HepG2 (cell line): ENCODE measurements at regions of chr9 and their contacts with region 1.

Region 1: DNA sequence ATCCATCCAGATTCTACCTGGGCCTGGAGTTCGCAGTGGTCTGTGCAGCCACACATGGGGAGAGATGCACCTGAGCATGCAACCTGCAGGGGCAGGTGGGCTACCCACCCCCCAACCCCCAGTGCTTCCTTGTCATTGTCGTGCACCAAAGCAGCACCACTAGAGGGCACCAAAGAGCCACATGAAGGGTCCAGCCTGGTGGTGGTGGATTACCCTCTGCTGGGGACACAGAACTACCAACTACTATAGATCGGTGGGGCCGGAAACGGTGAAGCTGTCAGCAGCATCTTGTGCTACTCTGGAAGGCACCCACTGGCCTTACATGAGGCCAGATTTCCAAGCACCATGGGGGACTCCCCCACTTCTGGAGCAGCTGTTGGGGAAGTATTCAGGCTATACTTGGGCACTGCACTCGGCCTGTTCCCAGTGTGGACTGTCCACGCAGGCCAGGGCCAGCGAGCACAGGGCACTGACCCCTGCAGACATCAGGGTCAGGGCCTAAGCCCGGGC is 60.2 kb upstream of the TBC1D2 start:
- DNase-seq: peak; percentile 80
- ATAC-seq: peak; percentile 98
- H3K4me3 ChIP-seq: no peak overlapping the region
- H3K27ac ChIP-seq: no peak overlapping the region
- H3K4me1 ChIP-seq: no peaks in the 10 kb centered on the region
- H3K27me3 ChIP-seq: peaks cover 0 to 12% of the 10 kb centered on the region in 2 experiments; a peak in 3 of 5 replicates
- CTCF ChIP-seq: peak; percentile 96
- EP300 ChIP-seq: no peak
- POLR2A ChIP-seq: no peak
- RAD21 ChIP-seq: peak; percentile 87

Region 2: GRCh38 chr9:97934321-97935115 is 381.1 kb before region 1 on chr9:
- CTCF ChIA-PET with region 1: no interaction called
- POLR2A ChIA-PET with region 1: no interaction called
- in situ Hi-C with region 1: no loop called
- intact Hi-C with region 1: no loop called
- DNase-seq: no peak
- ATAC-seq: no peak
- H3K4me3 ChIP-seq: no peak overlapping the region
- H3K27ac ChIP-seq: no peak overlapping the region
- H3K4me1 ChIP-seq: no peaks in the 10 kb centered on the region
- H3K27me3 ChIP-seq: peaks cover 2 to 4% of the 10 kb centered on the region in 2 experiments; a peak in 1 of 5 replicates
- CTCF ChIP-seq: no peak
- EP300 ChIP-seq: no peak
- POLR2A ChIP-seq: no peak
- RAD21 ChIP-seq: no peak

Region 3: GRCh38 chr9:98342820-98343210 is 27.2 kb after region 1 on chr9:
- CTCF ChIA-PET with region 1: no interaction called
- POLR2A ChIA-PET with region 1: no interaction called
- in situ Hi-C with region 1: no loop called
- intact Hi-C with region 1: no loop called
- DNase-seq: no peak
- ATAC-seq: no peak
- H3K4me3 ChIP-seq: no peak overlapping the region
- H3K27ac ChIP-seq: no peak overlapping the region
- H3K4me1 ChIP-seq: no peaks in the 10 kb centered on the region
- H3K27me3 ChIP-seq: peaks cover 1 to 5% of the 10 kb centered on the region in 2 experiments; a peak in 2 of 5 replicates
- CTCF ChIP-seq: no peak
- EP300 ChIP-seq: no peak
- POLR2A ChIP-seq: no peak
- RAD21 ChIP-seq: no peak

Region 4: GRCh38 chr9:98357921-98358535 is 42.4 kb after region 1 on chr9:
- CTCF ChIA-PET with region 1: no interaction called
- POLR2A ChIA-PET with region 1: no interaction called
- in situ Hi-C with region 1: no loop called
- intact Hi-C with region 1: no loop called
- DNase-seq: no peak
- ATAC-seq: no peak
- H3K4me3 ChIP-seq: no peak overlapping the region
- H3K27ac ChIP-seq: no peak overlapping the region
- H3K4me1 ChIP-seq: no peaks in the 10 kb centered on the region
- H3K27me3 ChIP-seq: peaks cover 0 to 12% of the 10 kb centered on the region in 2 experiments; a peak in 1 of 5 replicates
- CTCF ChIP-seq: no peak
- EP300 ChIP-seq: no peak
- POLR2A ChIP-seq: no peak
- RAD21 ChIP-seq: no peak

Region 5: GRCh38 chr9:98707166-98708102 is 391.8 kb after region 1 on chr9:
- CTCF ChIA-PET with region 1: no interaction called
- POLR2A ChIA-PET with region 1: no interaction called
- in situ Hi-C with region 1: loop called (anchors 10 kb)
- intact Hi-C with region 1: loop called (anchors 1 kb)
- DNase-seq: peak; percentile 17
- ATAC-seq: peak; percentile 93
- H3K4me3 ChIP-seq: no peak overlapping the region
- H3K27ac ChIP-seq: no peak overlapping the region
- H3K4me1 ChIP-seq: peaks cover 8% of the 10 kb centered on the region
- H3K27me3 ChIP-seq: peaks cover 2 to 39% of the 10 kb centered on the region in 2 experiments; a peak in 4 of 5 replicates
- CTCF ChIP-seq: peak; percentile 79
- EP300 ChIP-seq: no peak
- POLR2A ChIP-seq: no peak
- RAD21 ChIP-seq: peak; percentile 68

Region 6: DNA sequence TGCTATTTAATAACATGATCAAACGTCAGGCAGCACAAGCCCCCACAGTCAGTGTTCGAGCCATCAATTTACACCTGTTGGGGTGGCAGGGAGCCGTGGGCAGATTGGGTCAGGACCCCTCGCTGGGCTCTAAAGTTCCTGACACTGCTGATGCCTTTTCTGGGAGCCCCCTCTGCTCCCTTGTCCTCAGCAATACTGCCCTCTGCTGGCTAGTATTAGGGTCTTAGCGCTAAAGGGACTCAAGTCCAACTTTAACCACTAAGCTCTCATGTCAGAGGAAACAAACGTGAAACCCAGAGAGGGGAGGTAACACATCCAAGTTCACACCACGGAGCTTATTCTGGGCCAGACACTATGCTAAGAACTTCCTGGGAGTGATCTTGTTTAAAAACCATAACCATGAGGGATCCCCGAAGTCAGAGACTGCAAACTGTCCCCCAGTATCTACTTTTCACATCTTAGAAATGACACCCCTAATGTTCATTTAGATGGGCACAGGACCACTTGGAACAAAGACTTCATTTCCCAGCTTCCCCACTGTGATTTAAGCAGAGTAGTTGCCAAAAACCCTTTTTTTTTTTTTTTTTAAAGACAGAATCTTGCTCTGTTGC is 460.3 kb after region 1 on chr9:
- CTCF ChIA-PET with region 1: interaction called, 21 read pairs
- POLR2A ChIA-PET with region 1: no interaction called
- in situ Hi-C with region 1: loop called (anchors 5 kb)
- intact Hi-C with region 1: loop called (anchors 1 kb)
- DNase-seq: peak; percentile 67
- ATAC-seq: peak; percentile 50
- H3K4me3 ChIP-seq: no peak overlapping the region
- H3K27ac ChIP-seq: no peak overlapping the region
- H3K4me1 ChIP-seq: peaks cover 26% of the 10 kb centered on the region
- H3K27me3 ChIP-seq: no peaks in the 10 kb centered on the region
- CTCF ChIP-seq: peak; percentile 84
- EP300 ChIP-seq: no peak
- POLR2A ChIP-seq: no peak
- RAD21 ChIP-seq: peak; percentile 52